ENCODE measurements at regions of chr12 and their contacts with region 1.

Region 1: GRCh38 chr12:1457901-1458300 is 136.5 kb downstream of the FBXL14 start:
- DNase-seq: peak; percentile 88 to 89
- ATAC-seq: peak; percentile 77
- H3K4me3 ChIP-seq: no peak overlapping the region
- H3K27ac ChIP-seq: peak overlapping the region in 1 of 2 donors; percentile 40
- H3K4me1 ChIP-seq: no peaks in the 10 kb centered on the region
- H3K27me3 ChIP-seq: no peaks in the 10 kb centered on the region

Region 2: GRCh38 chr12:1474041-1474573 is 16.2 kb after region 1 on chr12:
- intact Hi-C with region 1: loop called in 1 of 2 experiments (anchors 2 kb)
- DNase-seq: no peak
- ATAC-seq: no peak
- H3K4me3 ChIP-seq: no peak overlapping the region
- H3K27ac ChIP-seq: peak overlapping the region; percentile 21 to 81
- H3K4me1 ChIP-seq: peaks cover 0 to 9% of the 10 kb centered on the region in 2 donors
- H3K27me3 ChIP-seq: no peaks in the 10 kb centered on the region

Measured in aorta (tissue), 5 donors.